AG04450 (cell line): ENCODE measurements at regions of chr20 and their contacts with region 1.

Region 1: GRCh38 chr20:31712564-31713311 is 9.9 kb downstream of the BCL2L1 start:
- DNase-seq: peak; percentile 67
- H3K4me3 ChIP-seq: peak overlapping the region; percentile 34
- H3K27ac ChIP-seq: peak overlapping the region; percentile 95
- H3K27me3 ChIP-seq: no peaks in the 10 kb centered on the region
- CTCF ChIP-seq: no peak

Region 2: DNA sequence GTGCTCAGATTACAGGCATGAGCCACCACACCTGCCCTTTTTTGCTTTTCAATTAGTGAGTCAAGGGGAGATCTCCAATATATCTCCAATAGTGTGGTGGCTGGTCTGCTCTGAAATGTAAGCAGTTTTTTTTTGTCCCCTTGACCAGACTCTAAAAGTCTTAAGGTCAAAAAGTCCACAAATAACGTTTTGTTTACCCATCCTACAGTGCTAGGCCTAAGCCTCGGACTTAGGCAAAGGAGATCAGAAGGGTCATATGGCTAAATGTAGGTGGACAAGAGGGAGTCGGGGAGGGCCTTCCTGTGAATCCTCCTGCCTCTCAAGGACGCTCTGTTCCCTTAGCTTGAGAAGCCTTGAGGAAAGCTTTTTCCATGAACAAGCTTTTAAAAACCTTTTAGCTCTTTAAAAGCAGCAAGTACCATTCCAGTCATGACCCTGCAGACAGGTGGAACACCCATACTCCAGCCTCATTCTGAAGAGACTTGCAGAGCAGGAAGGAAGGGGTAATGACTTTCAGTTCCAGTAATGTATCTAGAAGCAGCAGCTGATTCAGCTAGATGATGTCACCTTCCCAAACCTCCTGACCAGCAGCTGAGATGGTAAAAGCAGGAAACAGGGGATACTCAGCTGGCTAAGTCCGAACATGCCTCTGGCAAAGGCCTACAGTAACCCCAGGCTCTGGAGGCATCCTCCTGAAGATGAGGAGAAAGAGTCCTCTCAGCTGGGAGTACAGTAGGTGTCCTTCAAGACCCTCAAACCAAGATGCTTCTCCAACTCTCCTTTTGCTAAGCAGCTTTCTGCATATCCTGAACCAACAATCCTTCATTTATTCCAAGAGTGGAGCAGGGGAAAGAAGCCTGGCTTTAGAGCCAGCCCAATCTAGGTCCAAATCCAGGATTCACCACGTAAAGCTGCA is 13.7 kb before region 1 on chr20:
- CTCF ChIA-PET with region 1: interaction called, 6 read pairs
- POLR2A ChIA-PET with region 1: interaction called, 12 read pairs
- DNase-seq: peak; percentile 90
- H3K4me3 ChIP-seq: no peak overlapping the region
- H3K27ac ChIP-seq: peak overlapping the region; percentile 97
- H3K27me3 ChIP-seq: no peaks in the 10 kb centered on the region
- CTCF ChIP-seq: no peak